ENCODE measurements at regions of chr19 and their contacts with region 1.

Region 1: GRCh38 chr19:11293433-11294389 is 2.2 kb upstream of the TSPAN16 start:
- DNase-seq: peak; percentile 79
- ATAC-seq: peak; percentile 99
- H3K4me3 ChIP-seq: peak overlapping the region; percentile 36 to 51
- H3K27ac ChIP-seq: peak overlapping the region; percentile 39
- H3K4me1 ChIP-seq: peaks cover 18 to 30% of the 10 kb centered on the region in 2 experiments
- H3K27me3 ChIP-seq: no peaks in the 10 kb centered on the region
- CTCF ChIP-seq: peak; percentile 92 to 96 (median 95)
- POLR2A ChIP-seq: no peak
- RAD21 ChIP-seq: peak; percentile 99

Region 2: GRCh38 chr19:11482384-11483050 is 188.8 kb after region 1 on chr19:
- CTCF ChIA-PET with region 1: interaction called, 14 read pairs
- POLR2A ChIA-PET with region 1: no interaction called
- RAD21 ChIA-PET with region 1: interaction called, 3 read pairs
- intact Hi-C with region 1: loop called (anchors 2 kb)
- DNase-seq: peak; percentile 51
- ATAC-seq: peak; percentile 89
- H3K4me3 ChIP-seq: no peak overlapping the region
- H3K27ac ChIP-seq: no peak overlapping the region
- H3K4me1 ChIP-seq: peaks cover 0 to 3% of the 10 kb centered on the region in 2 experiments; a peak in 1 of 4 replicates
- H3K27me3 ChIP-seq: no peaks in the 10 kb centered on the region
- CTCF ChIP-seq: peak; percentile 82 to 94 (median 85)
- POLR2A ChIP-seq: no peak
- RAD21 ChIP-seq: peak; percentile 91

Region 3: GRCh38 chr19:11659612-11660011 is 365.9 kb after region 1 on chr19:
- CTCF ChIA-PET with region 1: no interaction called
- POLR2A ChIA-PET with region 1: no interaction called
- RAD21 ChIA-PET with region 1: no interaction called
- intact Hi-C with region 1: no loop called
- DNase-seq: no peak
- ATAC-seq: no peak
- H3K4me3 ChIP-seq: no peak overlapping the region
- H3K27ac ChIP-seq: no peak overlapping the region
- H3K4me1 ChIP-seq: no peaks in the 10 kb centered on the region
- H3K27me3 ChIP-seq: no peaks in the 10 kb centered on the region
- CTCF ChIP-seq: peak; percentile 29 to 54 (median 32); a peak in 4 of 6 replicates
- POLR2A ChIP-seq: no peak
- RAD21 ChIP-seq: peak; percentile 59

Region 4: DNA sequence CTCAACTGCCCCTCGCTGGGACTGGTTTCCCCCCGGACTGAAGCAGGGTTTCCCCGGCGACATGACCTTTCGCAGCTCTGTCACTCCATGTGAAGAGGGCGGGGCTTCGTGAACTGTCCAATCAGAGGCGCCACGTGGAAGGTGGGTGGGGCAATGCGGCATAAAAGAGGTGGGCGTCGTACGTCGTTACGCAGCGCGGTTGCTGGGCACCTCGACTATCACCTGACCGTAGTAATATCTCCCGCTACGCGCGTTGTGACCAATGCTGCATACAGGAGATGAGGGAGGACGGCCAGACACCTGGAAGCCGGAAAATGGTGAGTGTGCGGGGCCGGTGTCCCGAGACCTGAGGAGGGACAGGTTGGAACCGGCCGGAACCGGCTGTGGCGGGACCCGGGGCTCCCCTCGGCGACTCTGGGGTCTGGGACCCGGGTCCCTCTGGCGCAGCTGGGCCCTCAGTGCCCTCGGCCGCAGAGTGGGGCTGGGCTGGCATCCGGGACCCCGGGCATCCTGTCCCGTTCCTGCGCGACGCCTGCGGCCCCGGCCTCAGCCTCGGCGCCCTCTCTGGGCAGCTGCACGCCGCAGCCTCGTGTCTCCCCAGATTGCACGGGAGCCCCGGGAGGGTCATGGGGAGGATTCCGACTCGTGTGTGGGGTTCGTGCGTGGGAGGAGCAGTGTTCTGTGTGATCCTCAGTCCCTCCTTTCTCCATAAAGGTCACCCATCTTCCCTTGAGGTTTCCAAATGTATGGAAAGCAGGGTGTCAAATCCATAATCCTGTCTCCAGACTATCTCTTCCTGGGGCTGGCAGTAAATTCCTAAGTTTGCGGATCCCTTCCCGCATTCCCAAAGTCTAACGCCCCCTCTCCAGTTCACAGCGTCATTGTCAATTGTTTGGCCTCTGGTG is 901.4 kb after region 1 on chr19:
- CTCF ChIA-PET with region 1: no interaction called
- POLR2A ChIA-PET with region 1: no interaction called
- RAD21 ChIA-PET with region 1: no interaction called
- intact Hi-C with region 1: no loop called
- DNase-seq: no peak
- ATAC-seq: no peak
- H3K4me3 ChIP-seq: no peak overlapping the region
- H3K27ac ChIP-seq: no peak overlapping the region
- H3K4me1 ChIP-seq: no peaks in the 10 kb centered on the region
- H3K27me3 ChIP-seq: no peaks in the 10 kb centered on the region
- CTCF ChIP-seq: no peak
- POLR2A ChIP-seq: no peak
- RAD21 ChIP-seq: no peak

Measured in HCT116 (cell line).